Activated CD4-positive, alpha-beta memory T cell treated with anti-CD3 and anti-CD28 coated beads for 36 hours (primary cell): ENCODE measurements at regions of chr16 and their contacts with region 1.

Region 1: DNA sequence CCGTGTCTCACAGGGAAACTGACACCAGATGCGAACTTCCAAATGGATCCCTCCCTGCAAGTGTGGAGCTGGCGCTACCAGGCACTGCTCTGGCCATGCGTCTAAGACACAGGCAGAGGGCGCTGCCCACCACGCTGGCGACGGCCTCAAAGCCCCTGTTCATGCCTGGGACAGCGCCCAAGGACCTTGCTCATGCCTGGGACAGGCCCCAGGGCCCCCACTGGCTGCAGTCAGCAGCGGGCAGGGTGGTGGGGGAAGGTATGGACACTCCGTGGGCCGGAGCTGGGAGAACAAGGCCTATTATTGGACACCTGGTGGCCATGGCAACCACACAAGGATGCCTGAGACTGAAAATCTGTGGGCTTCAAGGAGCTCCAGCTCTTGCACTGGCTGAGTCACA is 8.8 kb downstream of the ZG16B start:
- DNase-seq: peak; percentile 72
- H3K4me3 Mint-ChIP-seq: no peak overlapping the region
- H3K27ac Mint-ChIP-seq: no peak overlapping the region
- H3K4me1 Mint-ChIP-seq: peaks cover 35% of the 10 kb centered on the region
- H3K27me3 Mint-ChIP-seq: peaks cover 1% of the 10 kb centered on the region

Region 2: DNA sequence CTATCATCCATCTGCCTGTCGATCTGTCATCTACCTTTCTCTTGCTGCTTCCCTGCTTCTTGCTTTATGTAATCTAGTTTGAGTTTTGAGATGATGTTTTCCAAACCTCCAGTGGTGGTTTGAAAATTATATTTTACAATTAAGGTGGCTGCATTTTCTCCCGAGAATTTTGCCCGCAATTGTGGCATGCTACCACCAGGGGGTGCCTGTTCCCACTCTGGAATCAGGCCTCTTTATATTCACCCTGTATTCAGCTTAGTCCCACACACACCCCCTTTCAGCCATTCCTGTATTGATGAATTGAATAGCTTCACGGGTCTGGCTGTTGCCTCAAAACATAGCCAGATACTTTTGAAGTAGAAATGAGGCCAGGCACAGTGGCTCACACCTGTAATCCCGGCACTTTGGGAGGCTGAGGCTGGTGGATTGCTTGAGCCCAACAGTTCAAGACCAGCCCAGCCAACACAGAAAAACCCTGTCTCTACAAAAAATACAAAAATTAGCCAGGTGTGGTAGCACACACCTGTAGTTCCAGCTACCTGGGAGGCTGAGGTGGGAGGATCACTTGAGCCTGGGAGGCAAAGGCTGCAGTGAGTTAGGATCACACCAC is 15.9 kb after region 1 on chr16:
- CTCF ChIA-PET with region 1: interaction called, 21 read pairs
- POLR2A ChIA-PET with region 1: no interaction called
- intact Hi-C with region 1: no loop called
- DNase-seq: peak; percentile 35
- H3K4me3 Mint-ChIP-seq: no peak overlapping the region
- H3K27ac Mint-ChIP-seq: no peak overlapping the region
- H3K4me1 Mint-ChIP-seq: peaks cover 5% of the 10 kb centered on the region
- H3K27me3 Mint-ChIP-seq: peaks cover 2% of the 10 kb centered on the region

Region 3: GRCh38 chr16:2874912-2875362 is 36.0 kb after region 1 on chr16:
- CTCF ChIA-PET with region 1: interaction called, 17 read pairs
- POLR2A ChIA-PET with region 1: no interaction called
- intact Hi-C with region 1: no loop called
- DNase-seq: peak; percentile 80
- H3K4me3 Mint-ChIP-seq: no peak overlapping the region
- H3K27ac Mint-ChIP-seq: no peak overlapping the region
- H3K4me1 Mint-ChIP-seq: no peaks in the 10 kb centered on the region
- H3K27me3 Mint-ChIP-seq: no peaks in the 10 kb centered on the region

Region 4: DNA sequence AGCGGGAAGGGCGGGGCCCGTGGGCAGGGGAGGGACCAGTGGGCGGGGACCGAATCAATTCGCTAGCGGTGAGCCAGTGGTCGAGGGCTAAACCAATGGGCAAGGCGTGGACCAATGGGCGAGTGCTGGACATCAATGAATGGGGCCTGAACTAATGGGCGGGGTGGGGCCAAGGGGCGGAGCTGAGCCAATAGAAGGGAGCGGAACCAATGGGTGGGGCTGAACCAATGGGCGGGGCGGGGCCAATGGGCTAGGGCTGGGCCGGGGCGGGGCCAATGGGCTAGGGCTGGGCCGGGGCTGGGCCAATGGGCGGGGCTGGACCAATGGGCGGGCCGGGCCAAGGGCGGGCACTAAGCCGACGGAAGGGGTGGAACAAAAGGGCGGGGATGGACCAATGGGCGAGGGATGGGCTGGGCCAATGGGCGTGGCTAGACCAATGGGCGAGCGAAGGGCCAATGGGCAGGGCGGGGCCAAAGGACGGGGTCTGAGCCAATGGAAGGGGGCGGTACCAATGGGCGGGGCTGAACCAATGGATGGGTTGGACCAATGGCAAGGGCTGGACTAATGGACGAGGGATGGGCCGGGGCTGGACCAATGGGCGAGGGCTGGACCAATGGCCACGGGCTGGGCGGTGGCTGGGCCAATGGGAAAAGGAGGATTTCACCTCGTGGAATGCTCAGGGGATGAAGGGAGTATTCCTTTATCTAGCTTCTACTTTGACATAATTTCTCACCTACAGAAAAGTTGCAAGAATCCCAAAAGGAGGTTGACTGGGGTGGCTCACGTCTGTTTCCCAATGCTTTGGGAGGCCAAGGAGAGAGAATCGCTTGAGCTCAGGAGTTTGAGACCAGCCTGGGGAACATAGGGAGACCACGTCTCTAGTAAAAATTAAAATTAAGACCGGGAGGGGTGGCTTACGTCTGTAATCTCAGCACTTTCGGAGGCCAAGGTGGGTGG is 66.8 kb after region 1 on chr16:
- CTCF ChIA-PET with region 1: interaction called, 12 read pairs
- POLR2A ChIA-PET with region 1: no interaction called
- intact Hi-C with region 1: no loop called
- DNase-seq: peak; percentile 99
- H3K4me3 Mint-ChIP-seq: peak overlapping the region; percentile 97
- H3K27ac Mint-ChIP-seq: peak overlapping the region; percentile 51
- H3K4me1 Mint-ChIP-seq: peaks cover 16% of the 10 kb centered on the region
- H3K27me3 Mint-ChIP-seq: no peaks in the 10 kb centered on the region

Region 5: DNA sequence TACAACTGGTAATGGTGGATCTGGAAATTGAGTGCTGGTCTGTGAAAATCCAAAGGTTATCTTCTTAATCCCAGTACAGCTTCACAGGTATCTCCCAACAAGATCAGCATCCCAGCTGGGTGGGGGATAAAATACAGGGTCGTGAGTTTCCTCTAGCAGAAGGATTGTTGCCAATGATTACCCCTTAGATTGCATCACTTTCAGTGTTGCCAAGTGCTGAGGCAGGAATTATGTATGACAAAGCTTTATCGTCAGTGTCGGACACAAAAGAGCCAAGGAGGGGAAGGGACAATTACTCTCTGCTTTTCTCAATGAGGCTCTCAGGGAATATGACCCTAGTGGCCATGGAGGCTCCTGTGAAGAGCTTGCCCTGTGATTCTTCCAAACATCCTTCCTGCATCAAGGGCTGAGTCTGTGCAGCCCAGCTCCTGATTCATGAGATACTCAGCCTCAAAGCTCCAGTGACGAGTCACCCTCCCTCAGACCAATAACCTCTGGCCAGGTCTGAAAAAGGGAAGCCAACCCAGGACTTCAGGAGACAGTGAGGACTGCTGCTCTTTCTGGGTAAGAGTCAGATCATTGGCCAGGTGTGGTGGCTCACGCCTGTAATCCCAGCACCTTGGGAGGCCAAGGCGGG is 364.1 kb after region 1 on chr16:
- CTCF ChIA-PET with region 1: no interaction called
- POLR2A ChIA-PET with region 1: no interaction called
- intact Hi-C with region 1: no loop called
- DNase-seq: no peak
- H3K4me3 Mint-ChIP-seq: no peak overlapping the region
- H3K27ac Mint-ChIP-seq: no peak overlapping the region
- H3K4me1 Mint-ChIP-seq: peaks cover 3% of the 10 kb centered on the region
- H3K27me3 Mint-ChIP-seq: peaks cover 2% of the 10 kb centered on the region